ENCODE measurements at regions of chr10 and their contacts with region 1.

Region 1: DNA sequence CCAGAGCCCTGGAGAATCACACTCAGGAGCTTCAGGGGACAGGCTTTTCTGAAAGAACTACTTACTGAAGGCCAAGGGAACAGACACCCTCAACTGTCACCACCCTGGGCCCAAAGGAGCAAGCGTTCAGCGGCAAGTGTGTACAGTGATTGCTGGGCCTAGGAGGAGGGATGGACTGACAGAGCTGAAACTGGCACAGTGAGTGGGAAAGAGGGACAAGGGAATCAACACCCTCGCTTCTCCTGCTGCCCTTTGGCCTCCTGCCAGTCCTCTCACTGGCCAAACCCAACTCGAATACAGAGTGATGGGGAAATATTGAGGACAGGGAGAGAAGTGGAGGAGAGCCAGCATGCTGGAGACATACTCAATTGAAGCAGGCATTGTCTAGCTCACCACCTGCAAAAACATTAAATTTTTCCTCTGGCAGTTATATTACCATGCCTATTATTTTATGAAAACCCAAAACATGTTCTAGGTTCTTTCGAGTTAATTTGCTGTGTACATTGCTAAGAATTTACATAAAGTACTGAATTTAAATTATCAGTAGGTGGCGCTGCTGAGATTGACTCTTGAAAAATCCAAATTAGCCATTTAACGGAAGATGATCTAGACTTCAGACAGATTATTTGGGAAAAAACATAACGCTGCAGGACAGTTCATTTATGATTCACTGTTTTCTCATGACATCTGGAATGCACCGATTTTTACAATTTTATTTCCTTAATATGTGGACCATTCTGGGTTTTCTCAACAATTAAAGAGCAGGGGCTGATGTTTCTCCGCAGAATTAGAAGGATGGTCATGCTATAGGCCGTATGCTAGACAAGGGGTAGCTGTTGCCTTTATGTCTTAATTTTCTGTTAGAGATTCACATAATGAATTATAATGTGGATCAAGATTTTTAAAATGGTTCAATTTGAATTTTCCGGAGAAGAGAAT is 14.7 kb upstream of the TMEM236 start:
- DNase-seq: peak; percentile 43
- H3K4me3 ChIP-seq: no peak overlapping the region
- H3K27ac ChIP-seq: no peak overlapping the region
- H3K4me1 ChIP-seq: peaks cover 9% of the 10 kb centered on the region
- H3K27me3 ChIP-seq: no peaks in the 10 kb centered on the region
- CTCF ChIP-seq: peak; percentile 29 to 45
- POLR2A ChIP-seq: no peak

Region 2: GRCh38 chr10:17872191-17873091 is 135.1 kb after region 1 on chr10:
- CTCF ChIA-PET with region 1: interaction called, 38 read pairs
- POLR2A ChIA-PET with region 1: no interaction called
- dilution Hi-C with region 1: no loop called
- intact Hi-C with region 1: loop called (anchors 1 kb)
- DNase-seq: peak; percentile 73
- H3K4me3 ChIP-seq: no peak overlapping the region
- H3K27ac ChIP-seq: no peak overlapping the region
- H3K4me1 ChIP-seq: no peaks in the 10 kb centered on the region
- H3K27me3 ChIP-seq: no peaks in the 10 kb centered on the region
- CTCF ChIP-seq: peak; percentile 57 to 58
- POLR2A ChIP-seq: no peak

Region 3: GRCh38 chr10:18104223-18104872 is 367.1 kb after region 1 on chr10:
- CTCF ChIA-PET with region 1: no interaction called
- POLR2A ChIA-PET with region 1: no interaction called
- dilution Hi-C with region 1: no loop called
- intact Hi-C with region 1: loop called (anchors 1 kb)
- DNase-seq: peak; percentile 52
- H3K4me3 ChIP-seq: no peak overlapping the region
- H3K27ac ChIP-seq: no peak overlapping the region
- H3K4me1 ChIP-seq: no peaks in the 10 kb centered on the region
- H3K27me3 ChIP-seq: no peaks in the 10 kb centered on the region
- CTCF ChIP-seq: peak; percentile 50 to 52
- POLR2A ChIP-seq: no peak

Region 4: GRCh38 chr10:18214691-18215563 is 477.6 kb after region 1 on chr10:
- CTCF ChIA-PET with region 1: no interaction called
- POLR2A ChIA-PET with region 1: no interaction called
- dilution Hi-C with region 1: no loop called
- intact Hi-C with region 1: loop called (anchors 2 kb)
- DNase-seq: peak; percentile 55
- H3K4me3 ChIP-seq: no peak overlapping the region
- H3K27ac ChIP-seq: no peak overlapping the region
- H3K4me1 ChIP-seq: no peaks in the 10 kb centered on the region
- H3K27me3 ChIP-seq: no peaks in the 10 kb centered on the region
- CTCF ChIP-seq: peak; percentile 47 to 65
- POLR2A ChIP-seq: no peak

Measured in endothelial cell of umbilical vein (primary cell).